Esophagus squamous epithelium (tissue), 5 donors: ENCODE measurements at regions of chr16 and their contacts with region 1.

Region 1: GRCh38 chr16:4330277-4330874 is 14.5 kb downstream of the GLIS2 start:
- DNase-seq: no peak
- H3K4me3 ChIP-seq: no peak overlapping the region
- H3K27ac ChIP-seq: peak overlapping the region in 1 of 4 donors; percentile 1
- H3K4me1 ChIP-seq: peaks cover 22 to 48% (median 27%) of the 10 kb centered on the region in 3 donors
- H3K27me3 ChIP-seq: peaks cover 0 to 17% (median 0%) of the 10 kb centered on the region in 4 donors
- CTCF ChIP-seq: peak; percentile 93 to 98 (median 94)
- POLR2A ChIP-seq: no peak

Region 2: GRCh38 chr16:4288148-4288921 is 42.0 kb before region 1 on chr16:
- intact Hi-C with region 1: loop called (anchors 5 kb)
- DNase-seq: no peak
- H3K4me3 ChIP-seq: no peak overlapping the region
- H3K27ac ChIP-seq: no peak overlapping the region
- H3K4me1 ChIP-seq: peaks cover 0 to 29% (median 14%) of the 10 kb centered on the region in 3 donors
- H3K27me3 ChIP-seq: peaks cover 0 to 8% (median 0%) of the 10 kb centered on the region in 4 donors
- CTCF ChIP-seq: peak; percentile 76 to 98 (median 90)
- POLR2A ChIP-seq: no peak